Activated CD8-positive, alpha-beta T cell treated with anti-CD3 and anti-CD28 coated beads for 36 hours (primary cell): ENCODE measurements at regions of chr2 and their contacts with region 1.

Region 1: DNA sequence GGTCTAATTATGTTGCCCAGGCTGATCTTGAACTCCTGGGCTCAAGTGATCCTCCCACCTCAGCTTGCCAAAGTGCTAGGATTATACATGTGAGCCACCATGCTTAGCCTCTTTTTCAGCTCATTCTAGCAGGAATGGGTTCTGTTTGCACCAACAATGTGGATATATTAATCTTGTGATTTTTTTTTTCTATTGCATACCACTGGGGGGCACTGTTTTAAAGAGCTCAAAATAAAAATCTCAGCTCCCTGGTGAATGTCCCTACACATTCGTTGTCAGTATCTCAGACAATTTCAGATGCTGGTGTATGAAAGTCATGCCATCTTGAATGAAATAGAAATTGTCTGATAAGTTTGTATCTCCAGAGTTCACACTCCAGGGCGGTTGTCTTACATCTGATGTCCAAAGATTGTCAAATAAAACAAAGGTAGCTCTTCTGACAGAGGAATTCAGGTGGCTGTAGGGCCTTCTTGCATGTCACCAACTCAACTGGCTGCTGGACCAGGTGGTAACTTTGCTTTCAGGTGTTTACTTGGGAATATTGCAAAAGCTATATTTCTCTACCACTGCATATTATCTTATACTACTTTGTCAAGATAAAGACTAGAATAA is 3.1 kb upstream of the MATN3 start:
- DNase-seq: no peak
- ATAC-seq: no peak
- H3K4me3 Mint-ChIP-seq: no peak overlapping the region
- H3K27ac Mint-ChIP-seq: no peak overlapping the region
- H3K4me1 Mint-ChIP-seq: peaks cover 8% of the 10 kb centered on the region
- H3K27me3 Mint-ChIP-seq: peaks cover 33% of the 10 kb centered on the region
- CTCF ChIP-seq: peak; percentile 64

Region 2: DNA sequence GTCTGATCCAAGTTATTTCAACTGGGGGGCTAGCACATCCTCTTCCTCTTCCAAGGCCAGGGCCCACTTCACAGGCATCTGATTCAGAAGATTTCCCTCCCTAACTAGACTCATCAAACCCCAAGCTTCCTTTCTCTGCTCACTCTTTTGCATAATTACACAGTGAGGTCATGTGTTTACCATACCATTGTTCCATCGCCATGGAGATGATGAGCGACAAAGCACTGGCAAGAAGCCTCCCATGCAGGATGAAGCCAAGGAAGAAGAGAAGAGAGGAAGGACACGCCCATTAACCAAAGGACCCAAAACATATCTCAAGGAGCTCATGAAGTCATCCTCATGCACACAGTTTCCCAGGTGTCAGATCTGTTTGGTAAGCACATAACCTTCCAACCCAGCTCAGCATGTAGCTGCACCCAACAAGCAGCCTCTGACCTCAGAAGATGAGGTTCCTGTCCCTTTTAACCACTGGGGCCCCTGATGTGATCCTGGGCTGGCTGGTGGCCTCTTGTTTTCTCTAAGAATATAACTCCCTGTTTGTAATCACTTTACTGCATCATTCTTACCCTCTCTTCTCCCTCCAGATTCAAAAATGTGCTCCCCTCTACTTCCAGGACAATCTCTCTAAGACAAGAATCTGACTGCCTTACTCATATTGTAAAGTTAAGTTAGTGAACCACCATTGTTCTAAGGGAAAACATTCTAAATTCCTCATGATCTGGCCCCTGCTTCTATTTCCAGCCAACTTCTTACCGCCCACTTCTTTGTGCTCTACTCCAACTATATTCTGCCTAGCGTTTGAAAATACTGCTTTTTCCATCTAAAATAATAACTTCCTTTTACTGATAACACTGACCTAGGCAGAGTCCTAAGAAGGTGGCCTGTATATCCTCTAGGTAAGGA is 303.9 kb before region 1 on chr2:
- CTCF ChIA-PET with region 1: no interaction called
- POLR2A ChIA-PET with region 1: no interaction called
- intact Hi-C with region 1: no loop called
- DNase-seq: no peak
- ATAC-seq: no peak
- H3K4me3 Mint-ChIP-seq: no peak overlapping the region
- H3K27ac Mint-ChIP-seq: no peak overlapping the region
- H3K4me1 Mint-ChIP-seq: no peaks in the 10 kb centered on the region
- H3K27me3 Mint-ChIP-seq: peaks cover 4% of the 10 kb centered on the region
- CTCF ChIP-seq: no peak

Region 3: GRCh38 chr2:19955544-19956422 is 59.8 kb before region 1 on chr2:
- CTCF ChIA-PET with region 1: interaction called, 24 read pairs
- POLR2A ChIA-PET with region 1: no interaction called
- intact Hi-C with region 1: no loop called
- DNase-seq: peak; percentile 54
- ATAC-seq: peak; percentile 86
- H3K4me3 Mint-ChIP-seq: no peak overlapping the region
- H3K27ac Mint-ChIP-seq: no peak overlapping the region
- H3K4me1 Mint-ChIP-seq: no peaks in the 10 kb centered on the region
- H3K27me3 Mint-ChIP-seq: no peaks in the 10 kb centered on the region
- CTCF ChIP-seq: peak; percentile 80

Region 4: GRCh38 chr2:19989681-19990415 is 25.7 kb before region 1 on chr2 and contains the start of gene WDR35:
- CTCF ChIA-PET with region 1: interaction called, 10 read pairs
- POLR2A ChIA-PET with region 1: no interaction called
- intact Hi-C with region 1: no loop called
- DNase-seq: peak; percentile 92
- ATAC-seq: peak; percentile 95
- H3K4me3 Mint-ChIP-seq: peak within 1 kb of the TSS; percentile 84
- H3K27ac Mint-ChIP-seq: peak within 1 kb of the TSS; percentile 76
- H3K4me1 Mint-ChIP-seq: peaks cover 28% of the 10 kb centered on the region
- H3K27me3 Mint-ChIP-seq: peaks cover 11% of the 10 kb centered on the region
- CTCF ChIP-seq: no peak
- total RNA-seq, gene WDR35: 5.6 to 5.9 TPM

Region 5: GRCh38 chr2:20030224-20030623 is 14.6 kb after region 1 on chr2:
- CTCF ChIA-PET with region 1: interaction called, 37 read pairs
- POLR2A ChIA-PET with region 1: no interaction called
- intact Hi-C with region 1: no loop called
- DNase-seq: no peak
- ATAC-seq: no peak
- H3K4me3 Mint-ChIP-seq: no peak overlapping the region
- H3K27ac Mint-ChIP-seq: no peak overlapping the region
- H3K4me1 Mint-ChIP-seq: no peaks in the 10 kb centered on the region
- H3K27me3 Mint-ChIP-seq: no peaks in the 10 kb centered on the region
- CTCF ChIP-seq: no peak

Region 6: DNA sequence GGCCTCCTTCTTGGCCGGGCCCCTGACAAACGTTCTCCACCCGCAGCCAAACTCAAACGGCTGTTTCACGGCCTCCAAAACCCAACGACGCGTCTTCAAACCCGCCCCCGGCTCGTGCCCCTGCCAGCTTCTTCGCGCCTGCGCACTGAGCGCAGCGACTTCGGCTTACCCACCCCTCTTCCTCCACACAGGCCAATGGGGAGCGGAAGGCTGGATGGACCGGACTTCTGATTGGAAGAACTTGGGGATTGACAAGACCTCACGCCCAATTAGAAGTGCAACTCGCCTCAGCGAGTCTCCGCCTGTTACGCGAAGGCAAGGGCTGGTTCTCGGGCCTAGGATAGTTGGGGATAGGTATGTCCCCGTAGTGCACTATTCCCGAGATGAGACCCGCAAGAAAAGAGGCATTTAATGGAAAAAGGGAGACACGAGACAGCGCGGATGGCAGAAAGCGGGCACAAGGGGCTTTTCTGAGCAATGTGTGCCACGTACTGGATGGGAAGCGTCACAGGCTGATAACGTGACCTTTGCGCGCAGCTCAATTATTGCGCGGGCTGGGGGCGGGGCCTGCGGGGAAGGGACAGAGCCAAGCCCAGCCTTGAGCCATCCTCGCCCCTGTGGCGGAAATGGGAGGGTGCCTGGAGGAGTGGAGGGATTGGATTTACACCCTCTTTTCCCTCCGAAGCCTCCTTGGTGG is 36.1 kb after region 1 on chr2 and contains the start of gene LAPTM4A:
- CTCF ChIA-PET with region 1: interaction called, 10 read pairs
- POLR2A ChIA-PET with region 1: no interaction called
- intact Hi-C with region 1: no loop called
- DNase-seq: peak; percentile 98
- ATAC-seq: peak; percentile 96
- H3K4me3 Mint-ChIP-seq: no peak within 1 kb of the TSS
- H3K27ac Mint-ChIP-seq: no peak within 1 kb of the TSS
- H3K4me1 Mint-ChIP-seq: peaks cover 26% of the 10 kb centered on the region
- H3K27me3 Mint-ChIP-seq: peaks cover 16% of the 10 kb centered on the region
- CTCF ChIP-seq: no peak
- total RNA-seq, gene LAPTM4A: 15.6 to 16.1 TPM

Region 7: GRCh38 chr2:20079546-20080135 is 64.1 kb after region 1 on chr2:
- CTCF ChIA-PET with region 1: interaction called, 17 read pairs
- POLR2A ChIA-PET with region 1: no interaction called
- intact Hi-C with region 1: no loop called
- DNase-seq: no peak
- ATAC-seq: no peak
- H3K4me3 Mint-ChIP-seq: no peak overlapping the region
- H3K27ac Mint-ChIP-seq: no peak overlapping the region
- H3K4me1 Mint-ChIP-seq: no peaks in the 10 kb centered on the region
- H3K27me3 Mint-ChIP-seq: peaks cover 8% of the 10 kb centered on the region
- CTCF ChIP-seq: no peak

Region 8: GRCh38 chr2:20097879-20098714 is 82.5 kb after region 1 on chr2:
- CTCF ChIA-PET with region 1: interaction called, 38 read pairs
- POLR2A ChIA-PET with region 1: interaction called, 3 read pairs
- intact Hi-C with region 1: loop called (anchors 2 kb)
- DNase-seq: peak; percentile 87
- ATAC-seq: peak; percentile 99
- H3K4me3 Mint-ChIP-seq: no peak overlapping the region
- H3K27ac Mint-ChIP-seq: no peak overlapping the region
- H3K4me1 Mint-ChIP-seq: no peaks in the 10 kb centered on the region
- H3K27me3 Mint-ChIP-seq: peaks cover 8% of the 10 kb centered on the region
- CTCF ChIP-seq: peak; percentile 89

Region 9: DNA sequence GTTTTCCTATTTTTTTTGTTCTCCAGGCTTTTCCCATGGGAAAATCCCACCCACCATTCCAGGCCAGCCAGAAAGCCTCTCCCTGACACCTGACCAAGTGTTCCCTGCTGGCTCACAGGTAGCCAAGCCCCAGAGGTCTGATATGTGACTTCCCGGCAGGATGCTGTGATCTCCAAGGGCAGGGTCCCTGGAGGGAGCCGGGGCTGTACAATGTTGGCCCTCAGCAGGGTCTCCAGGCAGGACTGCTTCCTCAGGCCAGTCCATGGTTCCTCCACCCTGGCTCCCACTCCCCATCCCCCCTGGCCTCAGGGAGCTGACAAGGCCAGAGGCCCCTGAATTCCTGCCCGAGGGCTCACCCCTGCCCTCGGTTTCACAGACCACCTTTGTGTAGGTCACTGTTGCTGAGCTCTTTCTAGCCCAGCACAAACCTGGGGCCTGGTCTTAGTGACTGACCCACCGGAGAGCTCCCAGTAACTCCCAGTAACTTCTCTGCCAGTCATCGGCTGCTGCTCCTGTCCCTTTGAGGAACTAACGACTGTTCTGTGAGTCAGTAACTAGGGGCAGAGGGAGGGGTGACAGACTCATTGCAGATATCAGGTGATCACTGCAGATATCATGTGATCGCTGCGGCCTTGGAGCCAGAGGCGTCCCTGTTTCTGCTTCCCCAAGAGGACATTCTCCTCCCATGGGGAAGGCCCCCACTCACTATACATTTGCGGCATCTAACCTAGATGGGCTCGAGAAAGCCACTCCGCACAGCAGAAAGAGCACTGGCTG is 170.7 kb after region 1 on chr2:
- CTCF ChIA-PET with region 1: no interaction called
- POLR2A ChIA-PET with region 1: no interaction called
- intact Hi-C with region 1: no loop called
- DNase-seq: no peak
- ATAC-seq: no peak
- H3K4me3 Mint-ChIP-seq: no peak overlapping the region
- H3K27ac Mint-ChIP-seq: no peak overlapping the region
- H3K4me1 Mint-ChIP-seq: no peaks in the 10 kb centered on the region
- H3K27me3 Mint-ChIP-seq: peaks cover 1% of the 10 kb centered on the region
- CTCF ChIP-seq: no peak